Activated T-helper 2 cell treated with anti-CD3 and anti-CD28 coated beads, Interferon-gamma antibody, Interleukin-2, Interleukin-4, amounts not matched to agents 10 μg/mL and 5 μg/mL and 100 μg/mL, durations not matched to agents 14 hours and 24 hours and 36 hours (primary cell): ENCODE measurements at regions of chr1 and their contacts with region 1.

Region 1: DNA sequence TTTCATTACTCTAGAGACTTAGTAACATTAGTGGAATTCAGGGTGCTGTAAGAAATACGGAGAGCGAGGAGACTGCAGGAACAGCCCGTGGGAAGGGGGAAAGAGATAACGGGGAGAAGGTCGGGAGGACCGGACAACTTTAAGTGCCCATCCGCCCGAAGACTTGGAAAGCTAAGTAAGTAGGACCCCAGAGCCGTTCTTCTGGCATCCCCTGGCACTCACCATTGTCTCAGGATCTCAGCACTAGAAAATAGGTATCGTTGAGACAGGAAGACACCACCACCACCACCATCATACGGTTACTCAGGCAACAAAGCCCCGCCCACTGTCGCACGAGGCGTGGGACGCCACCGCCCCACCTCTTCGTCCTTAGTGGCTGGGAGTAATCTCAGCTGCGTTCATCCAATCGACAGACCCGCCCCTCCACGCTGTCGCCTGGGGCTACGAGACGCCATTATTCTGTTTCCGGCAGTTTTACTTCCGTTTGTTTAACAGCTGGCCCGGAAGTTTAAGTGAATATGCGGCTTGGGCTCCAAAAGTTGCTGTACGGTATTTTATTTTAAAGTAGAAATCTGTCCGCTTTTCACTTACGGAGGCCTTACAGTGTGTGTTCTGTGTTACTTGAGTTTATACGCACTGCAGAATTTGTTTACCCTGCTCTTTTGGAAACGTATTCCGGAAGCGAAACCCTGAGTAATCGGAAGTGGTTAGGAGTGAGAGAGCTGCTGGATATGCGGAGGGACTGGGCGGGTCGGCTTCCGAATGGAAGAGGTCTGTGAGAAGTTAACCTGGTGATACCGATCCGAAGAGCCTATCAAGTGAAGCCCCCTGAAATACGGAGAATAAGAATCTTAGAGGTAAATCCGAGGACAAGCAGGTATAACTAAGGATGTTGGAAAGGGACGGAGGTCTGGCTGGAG is at the starts of genes BLZF1 and NME7:
- DNase-seq: peak; percentile 98
- H3K4me3 Mint-ChIP-seq: peak within 1 kb of the TSS; percentile 67
- H3K27ac Mint-ChIP-seq: peak within 1 kb of the TSS; percentile 21
- H3K4me1 Mint-ChIP-seq: peaks cover 35% of the 10 kb centered on the region
- H3K27me3 Mint-ChIP-seq: no peaks in the 10 kb centered on the region
- total RNA-seq, gene BLZF1: 11.8 and 11.9 TPM in 2 replicates
- total RNA-seq, gene NME7: 14.1 and 23.4 TPM in 2 replicates

Region 2: GRCh38 chr1:168234846-168235547 is 1132.7 kb before region 1 on chr1:
- intact Hi-C with region 1: loop called (anchors 1 kb)
- DNase-seq: peak; percentile 51
- H3K4me3 Mint-ChIP-seq: peak overlapping the region; percentile 53
- H3K27ac Mint-ChIP-seq: peak overlapping the region; percentile 94
- H3K4me1 Mint-ChIP-seq: peaks cover 70% of the 10 kb centered on the region
- H3K27me3 Mint-ChIP-seq: no peaks in the 10 kb centered on the region

Region 3: GRCh38 chr1:168466092-168466713 is 901.5 kb before region 1 on chr1:
- intact Hi-C with region 1: loop called (anchors 5 kb)
- DNase-seq: no peak
- H3K4me3 Mint-ChIP-seq: no peak overlapping the region
- H3K27ac Mint-ChIP-seq: peak overlapping the region; percentile 76
- H3K4me1 Mint-ChIP-seq: peaks cover 58% of the 10 kb centered on the region
- H3K27me3 Mint-ChIP-seq: no peaks in the 10 kb centered on the region

Region 4: DNA sequence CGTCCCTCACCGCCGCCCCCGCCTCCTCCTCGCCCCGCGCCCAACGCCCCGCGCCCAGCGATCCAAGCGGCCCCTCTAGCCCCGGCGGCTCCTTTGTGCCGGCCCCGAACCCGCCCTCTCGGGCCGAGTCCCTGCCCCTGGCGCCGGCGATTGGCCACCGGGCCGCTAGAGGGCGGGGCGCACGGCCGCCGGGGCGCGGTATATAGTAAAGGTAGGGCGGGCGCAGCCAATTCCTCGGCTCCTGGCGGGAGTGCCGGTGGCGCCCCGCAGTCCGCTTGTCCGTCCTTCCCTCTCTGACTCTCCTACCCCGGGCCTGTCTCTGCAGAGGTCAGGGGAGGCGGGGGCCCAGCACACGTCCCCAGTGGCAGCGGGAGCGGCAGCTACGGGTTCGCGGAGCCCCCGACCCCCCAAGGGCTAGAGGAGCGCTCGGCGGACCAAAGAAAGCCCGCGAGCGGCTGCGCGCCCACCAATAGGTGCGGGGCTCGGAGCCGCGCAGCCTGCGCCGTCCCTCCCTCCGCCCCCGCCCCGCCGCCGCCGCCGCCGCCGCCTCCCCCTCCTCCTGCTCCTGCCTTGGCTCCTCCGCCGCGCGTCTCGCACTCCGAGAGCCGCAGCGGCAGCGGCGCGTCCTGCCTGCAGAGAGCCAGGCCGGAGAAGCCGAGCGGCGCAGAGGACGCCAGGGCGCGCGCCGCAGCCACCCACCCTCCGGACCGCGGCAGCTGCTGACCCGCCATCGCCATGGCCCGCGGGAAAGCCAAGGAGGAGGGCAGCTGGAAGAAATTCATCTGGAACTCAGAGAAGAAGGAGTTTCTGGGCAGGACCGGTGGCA is 261.4 kb before region 1 on chr1 and contains the start of gene ATP1B1:
- intact Hi-C with region 1: loop called (anchors 1 kb)
- DNase-seq: peak; percentile 79
- H3K4me3 Mint-ChIP-seq: peak within 1 kb of the TSS; percentile 88
- H3K27ac Mint-ChIP-seq: peak within 1 kb of the TSS; percentile 78
- H3K4me1 Mint-ChIP-seq: peaks cover 42% of the 10 kb centered on the region
- H3K27me3 Mint-ChIP-seq: peaks cover 9% of the 10 kb centered on the region
- total RNA-seq, gene ATP1B1: 12.6 and 13.5 TPM in 2 replicates

Region 5: DNA sequence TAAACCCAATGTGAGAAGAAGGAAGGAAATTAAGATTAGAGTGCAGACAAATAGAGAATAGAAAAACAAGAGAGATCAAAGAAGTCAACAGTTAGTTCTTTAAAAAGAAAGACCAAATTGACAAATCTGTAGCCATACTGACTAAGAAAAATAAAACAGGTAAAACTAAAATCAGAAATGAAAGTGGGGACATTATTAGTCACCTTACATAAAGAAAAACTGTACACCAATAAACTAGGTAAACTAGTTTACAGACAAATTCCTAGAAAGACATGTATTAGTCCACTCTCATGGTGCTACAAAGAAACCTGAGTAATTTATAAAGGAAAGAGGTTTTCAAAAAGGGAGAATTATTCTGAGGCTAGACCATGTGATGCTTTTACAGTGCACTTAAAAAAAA is 22.6 kb after region 1 on chr1:
- intact Hi-C with region 1: loop called (anchors 1 kb)
- DNase-seq: no peak
- H3K4me3 Mint-ChIP-seq: no peak overlapping the region
- H3K27ac Mint-ChIP-seq: peak overlapping the region; percentile 29
- H3K4me1 Mint-ChIP-seq: peaks cover 19% of the 10 kb centered on the region
- H3K27me3 Mint-ChIP-seq: no peaks in the 10 kb centered on the region

Region 6: DNA sequence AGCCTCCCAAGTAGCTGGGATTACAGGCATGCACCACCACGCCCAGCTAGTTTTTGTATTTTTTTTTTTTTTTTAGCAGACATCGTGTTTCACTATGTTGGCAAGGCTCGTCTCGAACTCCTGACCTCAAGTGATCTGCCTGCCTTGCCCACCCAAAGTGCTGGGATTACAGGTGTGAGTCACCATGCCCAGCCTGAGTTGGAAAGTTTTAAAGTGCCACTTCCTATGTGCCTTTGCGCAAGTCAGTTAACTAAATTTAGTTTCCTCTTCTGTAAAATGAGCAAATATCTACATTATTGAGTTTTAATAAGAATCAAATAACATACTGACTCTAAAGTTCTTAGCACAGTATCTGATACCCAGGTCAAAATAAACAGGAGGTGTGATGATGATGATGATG is 105.6 kb after region 1 on chr1:
- intact Hi-C with region 1: no loop called
- DNase-seq: no peak
- H3K4me3 Mint-ChIP-seq: no peak overlapping the region
- H3K27ac Mint-ChIP-seq: no peak overlapping the region
- H3K4me1 Mint-ChIP-seq: peaks cover 8% of the 10 kb centered on the region
- H3K27me3 Mint-ChIP-seq: no peaks in the 10 kb centered on the region

Region 7: GRCh38 chr1:169694304-169695075 is 326.7 kb after region 1 on chr1:
- intact Hi-C with region 1: loop called (anchors 2 kb)
- DNase-seq: peak; percentile 55
- H3K4me3 Mint-ChIP-seq: peak overlapping the region; percentile 28
- H3K27ac Mint-ChIP-seq: peak overlapping the region; percentile 84
- H3K4me1 Mint-ChIP-seq: peaks cover 94% of the 10 kb centered on the region
- H3K27me3 Mint-ChIP-seq: no peaks in the 10 kb centered on the region

Region 8: DNA sequence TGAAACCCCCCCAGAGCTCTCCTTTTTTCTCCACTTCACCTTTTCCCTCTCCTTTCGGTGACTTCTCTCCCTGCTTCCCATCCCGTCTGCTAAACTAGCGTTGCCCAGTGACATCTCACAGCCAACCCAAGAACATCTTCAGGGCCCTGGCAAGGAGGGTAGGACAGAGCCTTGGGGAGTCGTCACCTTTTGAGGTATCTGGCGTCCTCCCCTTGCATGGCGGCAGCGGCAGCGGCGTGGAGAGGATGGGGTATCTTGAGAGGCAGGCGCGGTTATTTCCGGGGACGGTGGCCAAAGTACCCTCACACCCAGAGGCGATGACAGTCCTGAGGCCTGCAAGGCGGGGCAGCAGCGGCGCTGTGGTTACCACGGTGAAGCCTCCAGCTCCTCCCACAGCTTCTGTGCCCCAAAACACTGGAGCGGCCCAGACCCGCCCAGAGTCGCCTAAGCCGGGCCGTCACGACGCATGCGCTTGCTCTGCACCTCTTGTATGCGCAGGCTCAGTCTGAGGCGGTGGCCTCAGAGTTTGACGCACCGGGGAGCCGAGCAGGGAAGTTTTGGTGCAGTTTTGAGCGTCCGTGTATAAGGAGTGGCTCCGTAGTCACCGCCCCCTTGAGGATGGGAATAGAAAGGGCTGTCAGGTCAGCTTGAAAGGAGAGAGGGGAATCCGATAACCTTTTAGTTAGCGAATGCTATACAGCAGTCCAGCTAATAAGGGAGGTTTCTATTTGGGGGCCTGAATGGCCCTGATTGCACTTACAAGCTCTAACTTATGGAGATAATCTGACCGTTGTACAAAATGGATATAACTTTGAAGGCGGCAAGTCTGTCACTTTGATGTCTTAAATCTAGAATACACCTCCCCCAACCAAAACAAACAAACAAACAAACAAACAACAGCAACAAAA is 706.8 kb after region 1 on chr1 and contains the start of gene KIFAP3:
- intact Hi-C with region 1: loop called (anchors 5 kb)
- DNase-seq: peak; percentile 96
- H3K4me3 Mint-ChIP-seq: peak within 1 kb of the TSS; percentile 96
- H3K27ac Mint-ChIP-seq: peak within 1 kb of the TSS; percentile 94
- H3K4me1 Mint-ChIP-seq: peaks cover 28% of the 10 kb centered on the region
- H3K27me3 Mint-ChIP-seq: no peaks in the 10 kb centered on the region
- total RNA-seq, gene KIFAP3: 15.1 and 15.5 TPM in 2 replicates